T-cell (primary cell): ENCODE measurements at regions of chr17 and their contacts with region 1.

Region 1: DNA sequence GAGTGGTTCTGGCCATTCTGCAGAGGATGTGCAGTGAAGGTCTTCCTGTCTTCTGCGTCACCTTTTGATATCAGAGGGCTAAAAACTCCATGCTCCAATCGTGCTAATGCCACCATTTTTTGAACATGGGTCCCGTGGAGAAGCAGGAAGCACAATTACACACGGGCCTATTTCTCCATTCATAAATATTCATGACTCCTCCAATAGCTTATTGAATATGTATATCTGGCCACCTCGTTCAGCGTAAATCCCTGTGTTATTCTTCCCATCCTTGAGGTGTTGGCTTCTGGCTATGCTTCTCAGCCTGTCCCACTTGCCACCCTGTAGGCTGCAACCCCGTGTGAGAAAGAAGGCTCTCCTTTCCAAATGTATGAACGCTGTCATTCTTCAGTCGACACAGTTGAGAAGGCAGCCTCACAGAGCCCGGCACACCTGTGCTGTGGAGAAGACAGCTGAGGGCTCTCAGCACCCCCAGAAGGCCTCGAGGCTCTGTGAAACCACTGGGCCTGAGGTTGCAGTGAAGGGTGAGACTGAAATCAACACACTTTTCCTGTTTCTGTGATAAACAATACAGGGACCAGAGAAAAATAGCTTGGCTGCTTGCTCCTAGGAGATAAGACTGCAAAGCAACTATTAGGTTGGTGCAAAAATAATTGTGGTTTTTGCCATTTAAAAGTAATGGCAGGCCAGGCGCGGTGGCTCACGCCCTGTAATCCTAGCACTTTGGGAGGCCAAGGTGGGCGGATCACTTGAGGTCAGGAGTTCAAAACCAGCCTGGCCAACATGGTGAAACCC is 4.9 kb upstream of the ANKRD40CL start:
- DNase-seq: peak in 3 of 35 experiments; percentile 6 to 30 (median 11)
- ATAC-seq: no peak
- H3K4me3 ChIP-seq: no peak overlapping the region
- H3K4me3 Mint-ChIP-seq: no peak overlapping the region
- H3K27ac ChIP-seq: no peak overlapping the region
- H3K27ac Mint-ChIP-seq: peak overlapping the region in 1 of 2 donors; percentile 60
- H3K4me1 ChIP-seq: no peaks in the 10 kb centered on the region
- H3K4me1 Mint-ChIP-seq: peaks cover 0 to 7% (median 0%) of the 10 kb centered on the region in 3 donors
- H3K27me3 ChIP-seq: peaks cover 0 to 2% of the 10 kb centered on the region in 2 experiments
- H3K27me3 Mint-ChIP-seq: peaks cover 2 to 6% of the 10 kb centered on the region in 2 donors

Region 2: GRCh38 chr17:50834429-50835300 is 62.5 kb after region 1 on chr17:
- CTCF ChIA-PET with region 1: interaction called in 1 of 2 experiments, 17 read pairs
- POLR2A ChIA-PET with region 1: no interaction called
- DNase-seq: no peak
- ATAC-seq: no peak
- H3K4me3 ChIP-seq: no peak overlapping the region
- H3K4me3 Mint-ChIP-seq: no peak overlapping the region
- H3K27ac ChIP-seq: no peak overlapping the region
- H3K27ac Mint-ChIP-seq: peak overlapping the region in 1 of 2 donors; percentile 27
- H3K4me1 ChIP-seq: no peaks in the 10 kb centered on the region
- H3K4me1 Mint-ChIP-seq: peaks cover 0 to 5% (median 0%) of the 10 kb centered on the region in 3 donors
- H3K27me3 ChIP-seq: peaks cover 0 to 58% of the 10 kb centered on the region in 2 experiments
- H3K27me3 Mint-ChIP-seq: peaks cover 16 to 23% of the 10 kb centered on the region in 2 donors